Right ventricle myocardium inferior (tissue), 1 donor: ENCODE measurements at regions of chr1 and their contacts with region 1.

Region 1: GRCh38 chr1:36450270-36450918 is at the start of gene OSCP1:
- DNase-seq: peak; percentile 97
- ATAC-seq: peak; percentile 99
- total RNA-seq, gene OSCP1: 5.3 TPM

Region 2: DNA sequence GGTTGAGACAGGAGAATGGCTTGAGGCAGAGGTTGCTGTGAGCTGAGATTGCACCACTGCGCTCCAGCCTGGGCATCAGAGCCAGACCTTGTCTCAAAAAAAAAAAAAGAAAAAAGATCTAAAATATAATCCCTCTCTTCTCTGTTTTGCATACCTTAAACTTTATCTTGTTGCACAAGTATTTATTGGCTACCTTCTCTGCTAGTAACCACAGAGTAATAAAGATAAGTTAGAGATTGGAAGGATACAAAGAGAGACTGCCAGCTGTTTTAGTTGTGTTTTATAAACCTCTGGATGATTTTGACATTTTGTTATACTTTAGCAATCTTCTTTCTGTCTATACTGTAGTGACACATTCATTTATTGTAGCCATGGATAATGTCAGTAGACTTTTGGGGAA is 491.8 kb before region 1 on chr1:
- intact Hi-C with region 1: no loop called
- DNase-seq: no peak
- ATAC-seq: no peak

Region 3: DNA sequence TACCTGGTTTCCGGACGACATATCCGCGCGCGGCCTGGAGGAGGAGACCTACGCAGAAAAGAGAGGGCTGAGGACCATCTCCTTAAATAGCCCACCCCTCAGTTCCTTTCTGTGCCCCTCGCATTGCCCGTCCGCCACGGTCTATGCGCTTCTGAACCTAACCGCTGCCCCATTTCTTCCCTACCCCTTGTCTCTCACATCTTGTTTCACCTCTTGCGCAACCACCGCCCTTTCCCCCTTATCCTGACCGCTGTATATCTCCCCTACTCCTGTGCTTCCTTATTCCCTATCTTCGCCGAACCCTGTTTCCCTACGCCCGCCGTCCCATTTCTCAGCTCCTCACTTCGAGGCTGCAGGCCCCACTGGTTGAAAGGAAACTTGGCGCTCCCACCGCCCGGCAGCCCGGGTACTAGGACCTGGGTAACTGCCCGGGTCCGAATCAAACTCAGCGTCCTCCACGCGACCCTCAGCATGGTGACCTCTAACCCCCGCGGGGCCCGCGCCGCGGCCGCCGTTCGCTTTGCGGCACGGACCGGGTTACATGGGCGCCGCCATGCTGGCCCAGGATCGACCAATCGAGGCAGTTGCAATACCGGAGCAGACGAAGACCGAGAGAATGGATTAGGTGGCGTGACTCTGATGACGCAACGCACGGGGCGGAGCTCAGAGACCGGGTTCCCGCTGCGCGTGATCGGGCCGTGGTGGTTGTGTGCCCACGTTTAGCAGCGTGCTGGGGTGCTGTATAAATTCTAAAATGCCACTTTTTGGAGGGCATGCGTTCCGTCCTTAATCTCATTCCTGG is 13.6 kb after region 1 on chr1 and contains the start of gene MRPS15:
- intact Hi-C with region 1: loop called (anchors 1 kb)
- DNase-seq: peak; percentile 98
- ATAC-seq: peak; percentile 95
- total RNA-seq, gene MRPS15: 114 TPM